Activated CD4-positive, alpha-beta memory T cell treated with anti-CD3 and anti-CD28 coated beads, Interleukin-2, amount 10 ng/mL, durations not matched to agents 7 days and 5 days (primary cell): ENCODE measurements at regions of chr14 and their contacts with region 1.

Region 1: DNA sequence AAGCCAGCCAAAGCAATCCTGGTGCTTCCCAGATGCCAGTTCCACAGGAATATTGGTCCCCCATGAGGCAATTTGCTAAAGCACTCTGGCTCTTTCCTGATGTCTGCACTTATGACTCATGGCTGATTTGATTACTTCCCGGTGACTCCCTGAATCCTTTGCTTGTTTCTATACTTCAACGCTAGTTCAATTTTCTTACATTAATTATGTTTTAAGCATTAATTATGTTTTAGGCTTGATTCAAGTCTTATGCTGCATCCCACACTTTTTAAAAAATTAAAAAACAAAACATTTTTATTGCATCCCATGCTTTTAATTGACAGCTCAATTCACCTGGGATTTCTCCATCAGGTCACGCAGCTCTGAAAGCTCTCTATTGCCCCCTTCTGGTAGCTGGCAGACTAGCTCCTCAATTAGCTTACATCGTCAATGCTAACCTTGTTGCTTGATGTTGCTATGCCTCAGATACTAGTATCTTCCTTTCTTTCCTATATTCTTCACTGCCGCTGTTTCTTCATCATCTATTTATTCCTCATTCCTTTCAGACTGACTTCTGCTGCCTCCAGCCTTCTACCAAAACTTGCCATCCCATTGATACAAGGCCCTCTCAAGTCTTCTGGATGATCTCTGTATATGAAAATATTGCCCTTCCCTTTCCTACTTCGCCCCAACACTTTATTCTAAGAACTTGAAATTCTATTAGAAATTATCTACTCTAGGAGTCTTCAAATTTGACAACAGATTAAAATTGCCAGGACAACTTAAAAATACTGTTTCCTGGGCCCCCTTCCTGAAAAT is 32.0 kb downstream of the TSHR start:
- DNase-seq: peak; percentile 71
- H3K4me3 Mint-ChIP-seq: no peak overlapping the region
- H3K27ac Mint-ChIP-seq: no peak overlapping the region
- H3K4me1 Mint-ChIP-seq: peaks cover 11% of the 10 kb centered on the region
- H3K27me3 Mint-ChIP-seq: peaks cover 5% of the 10 kb centered on the region

Region 2: GRCh38 chr14:80862983-80863382 is 124.5 kb before region 1 on chr14:
- CTCF ChIA-PET with region 1: interaction called, 12 read pairs
- POLR2A ChIA-PET with region 1: no interaction called
- DNase-seq: no peak
- H3K4me3 Mint-ChIP-seq: no peak overlapping the region
- H3K27ac Mint-ChIP-seq: no peak overlapping the region
- H3K4me1 Mint-ChIP-seq: no peaks in the 10 kb centered on the region
- H3K27me3 Mint-ChIP-seq: no peaks in the 10 kb centered on the region

Region 3: DNA sequence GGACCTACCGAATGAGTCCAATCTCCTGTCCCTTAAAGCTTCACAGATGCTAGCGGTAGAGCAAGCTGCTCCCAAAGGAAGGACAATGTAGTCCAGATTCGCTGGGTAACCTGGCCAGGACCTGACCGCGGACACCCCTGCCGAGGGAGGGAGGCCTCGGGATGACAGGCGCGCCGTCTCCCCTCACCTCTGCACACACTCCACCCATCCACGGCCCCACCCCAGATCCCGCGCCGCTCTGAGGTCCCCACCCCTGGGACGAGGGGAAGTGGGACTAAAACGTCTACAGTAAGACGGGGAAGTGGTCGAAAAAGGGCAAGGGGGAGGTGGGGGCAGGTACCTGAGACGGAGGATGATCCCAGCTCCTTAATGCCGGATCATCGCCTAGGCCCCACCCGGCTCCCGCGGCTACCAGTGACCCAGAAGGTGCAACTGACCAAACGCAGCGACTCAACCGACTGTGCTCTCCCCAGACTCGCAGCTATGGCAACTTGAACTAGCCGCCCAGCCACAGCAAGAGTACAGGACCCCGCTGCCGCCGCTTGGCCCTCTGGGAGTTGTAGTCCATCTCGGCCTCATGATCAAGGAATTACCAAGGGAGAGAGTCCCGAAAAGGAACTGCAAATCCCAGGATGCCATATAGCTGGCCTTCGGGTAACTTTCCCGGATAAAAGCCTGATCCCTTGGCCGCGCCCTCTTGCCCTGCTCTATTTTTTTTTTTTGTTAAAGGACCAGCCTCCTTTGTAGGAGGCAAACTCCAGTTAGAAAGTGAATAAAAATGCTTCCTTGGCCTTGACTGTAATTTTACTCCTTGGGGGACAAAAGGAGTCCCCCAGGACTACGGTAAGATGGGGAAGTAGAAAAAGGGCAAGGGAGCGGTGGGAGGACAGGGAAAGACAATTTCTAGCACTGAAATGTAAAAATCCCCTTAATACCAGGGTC is 45.9 kb before region 1 on chr14 and contains the start of gene CEP128:
- CTCF ChIA-PET with region 1: interaction called, 21 read pairs
- POLR2A ChIA-PET with region 1: interaction called, 3 read pairs
- DNase-seq: peak; percentile 92
- H3K4me3 Mint-ChIP-seq: peak within 1 kb of the TSS; percentile 88
- H3K27ac Mint-ChIP-seq: peak within 1 kb of the TSS; percentile 66
- H3K4me1 Mint-ChIP-seq: peaks cover 32% of the 10 kb centered on the region
- H3K27me3 Mint-ChIP-seq: no peaks in the 10 kb centered on the region
- total RNA-seq, gene CEP128: 24.7 to 26.0 TPM

Region 4: DNA sequence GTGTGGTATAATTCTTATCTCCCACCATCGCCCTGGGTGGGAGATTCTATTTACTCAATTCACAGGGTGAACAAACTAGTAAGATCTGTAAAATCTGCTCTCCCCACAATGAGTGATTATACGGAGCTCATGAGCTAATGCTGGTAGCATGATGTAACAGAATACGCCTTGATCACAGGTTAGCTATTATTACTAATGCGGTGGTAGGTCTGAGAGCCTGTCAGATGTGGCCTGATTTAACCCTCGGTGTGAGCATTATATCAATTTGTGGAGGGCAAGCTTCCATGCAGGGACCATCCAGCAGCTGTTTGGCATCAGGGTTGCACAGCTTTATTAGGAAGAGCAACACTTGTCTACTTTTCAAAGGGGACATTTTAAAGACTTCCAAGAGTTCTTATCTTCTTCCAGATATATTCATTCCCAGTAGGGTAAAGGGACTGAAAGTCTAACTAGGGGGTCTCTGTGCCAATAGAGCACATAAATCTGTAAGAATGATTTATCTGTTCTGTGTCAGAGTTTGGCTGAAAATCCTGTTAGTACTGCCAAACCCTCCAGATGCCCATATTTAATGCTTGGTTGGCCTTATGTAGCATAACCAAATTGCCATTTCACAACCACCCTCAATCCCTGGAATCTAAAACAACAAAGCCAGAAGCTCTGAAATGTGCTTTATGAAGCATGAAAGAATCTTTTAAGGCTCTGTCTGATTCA is 13.3 kb before region 1 on chr14:
- CTCF ChIA-PET with region 1: interaction called, 66 read pairs
- POLR2A ChIA-PET with region 1: interaction called, 8 read pairs
- DNase-seq: no peak
- H3K4me3 Mint-ChIP-seq: no peak overlapping the region
- H3K27ac Mint-ChIP-seq: no peak overlapping the region
- H3K4me1 Mint-ChIP-seq: peaks cover 45% of the 10 kb centered on the region
- H3K27me3 Mint-ChIP-seq: peaks cover 16% of the 10 kb centered on the region

Region 5: GRCh38 chr14:81170104-81170828 is 182.8 kb after region 1 on chr14:
- CTCF ChIA-PET with region 1: interaction called, 13 read pairs
- POLR2A ChIA-PET with region 1: interaction called, 6 read pairs
- DNase-seq: peak; percentile 90
- H3K4me3 Mint-ChIP-seq: peak overlapping the region; percentile 84
- H3K27ac Mint-ChIP-seq: peak overlapping the region; percentile 89
- H3K4me1 Mint-ChIP-seq: peaks cover 46% of the 10 kb centered on the region
- H3K27me3 Mint-ChIP-seq: no peaks in the 10 kb centered on the region